Activated T-helper 1 cell treated with anti-CD3 and anti-CD28 coated beads, Interleukin-12 subunit alpha, Interleukin-12 subunit beta, Interleukin-2, Interleukin-4 antibody, amounts not matched to agents 30 ng/mL and 10 ng/mL and 1 ng/mL, durations not matched to agents 14 hours and 24 hours and 36 hours (primary cell): ENCODE measurements at regions of chr5 and their contacts with region 1.

Region 1: GRCh38 chr5:10563945-10564837 is at the start of gene ANKRD33B:
- DNase-seq: peak; percentile 82
- H3K4me3 Mint-ChIP-seq: peak within 1 kb of the TSS; percentile 95
- H3K27ac Mint-ChIP-seq: peak within 1 kb of the TSS; percentile 89
- H3K4me1 Mint-ChIP-seq: peaks cover 54% of the 10 kb centered on the region
- H3K27me3 Mint-ChIP-seq: peaks cover 23% of the 10 kb centered on the region
- total RNA-seq, gene ANKRD33B: 21.4 and 21.5 TPM in 2 replicates

Region 2: GRCh38 chr5:10441083-10441991 is 122.9 kb before region 1 on chr5 and contains the start of gene ROPN1L:
- intact Hi-C with region 1: loop called (anchors 5 kb)
- DNase-seq: peak; percentile 80
- H3K4me3 Mint-ChIP-seq: peak within 1 kb of the TSS; percentile 85
- H3K27ac Mint-ChIP-seq: no peak within 1 kb of the TSS
- H3K4me1 Mint-ChIP-seq: peaks cover 35% of the 10 kb centered on the region
- H3K27me3 Mint-ChIP-seq: peaks cover 2% of the 10 kb centered on the region
- total RNA-seq, gene ROPN1L: 0.16 and 0.20 TPM in 2 replicates

Region 3: GRCh38 chr5:10595678-10596309 is 31.6 kb after region 1 on chr5:
- intact Hi-C with region 1: loop called (anchors 1 kb)
- DNase-seq: peak; percentile 54
- H3K4me3 Mint-ChIP-seq: peak overlapping the region; percentile 9
- H3K27ac Mint-ChIP-seq: peak overlapping the region; percentile 44
- H3K4me1 Mint-ChIP-seq: peaks cover 77% of the 10 kb centered on the region
- H3K27me3 Mint-ChIP-seq: peaks cover 4% of the 10 kb centered on the region

Region 4: DNA sequence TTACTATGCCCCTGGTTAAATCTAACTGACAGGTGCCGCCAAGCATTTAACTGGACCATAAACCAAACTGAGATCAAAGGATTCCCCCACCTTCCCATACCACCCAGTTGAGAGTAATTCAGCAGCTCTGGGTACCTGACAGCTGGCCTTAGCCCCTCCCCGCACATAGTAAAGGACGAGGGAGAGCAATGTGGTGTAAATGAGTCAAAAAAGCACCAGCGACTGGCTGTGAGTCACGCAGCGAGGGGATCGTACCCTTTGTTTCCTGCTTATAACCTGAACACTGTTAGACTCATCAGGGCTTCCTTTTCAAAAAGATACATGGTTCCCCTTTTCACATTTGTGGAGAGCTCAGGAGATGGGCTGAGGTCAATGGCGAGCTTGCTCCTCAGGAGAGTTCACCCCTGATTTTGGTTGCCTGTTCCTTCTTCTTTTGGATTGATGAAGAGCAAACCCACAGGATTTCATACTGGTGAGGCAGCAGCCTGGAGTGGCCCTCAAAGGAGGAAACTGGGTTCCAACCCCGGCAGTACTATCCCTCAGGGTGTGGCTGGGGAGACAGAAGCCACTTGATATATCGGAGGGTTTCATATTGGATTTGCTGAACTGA is 71.2 kb after region 1 on chr5:
- intact Hi-C with region 1: loop called (anchors 1 kb)
- DNase-seq: peak; percentile 73
- H3K4me3 Mint-ChIP-seq: peak overlapping the region; percentile 69
- H3K27ac Mint-ChIP-seq: peak overlapping the region; percentile 93
- H3K4me1 Mint-ChIP-seq: peaks cover 80% of the 10 kb centered on the region
- H3K27me3 Mint-ChIP-seq: no peaks in the 10 kb centered on the region

Region 5: DNA sequence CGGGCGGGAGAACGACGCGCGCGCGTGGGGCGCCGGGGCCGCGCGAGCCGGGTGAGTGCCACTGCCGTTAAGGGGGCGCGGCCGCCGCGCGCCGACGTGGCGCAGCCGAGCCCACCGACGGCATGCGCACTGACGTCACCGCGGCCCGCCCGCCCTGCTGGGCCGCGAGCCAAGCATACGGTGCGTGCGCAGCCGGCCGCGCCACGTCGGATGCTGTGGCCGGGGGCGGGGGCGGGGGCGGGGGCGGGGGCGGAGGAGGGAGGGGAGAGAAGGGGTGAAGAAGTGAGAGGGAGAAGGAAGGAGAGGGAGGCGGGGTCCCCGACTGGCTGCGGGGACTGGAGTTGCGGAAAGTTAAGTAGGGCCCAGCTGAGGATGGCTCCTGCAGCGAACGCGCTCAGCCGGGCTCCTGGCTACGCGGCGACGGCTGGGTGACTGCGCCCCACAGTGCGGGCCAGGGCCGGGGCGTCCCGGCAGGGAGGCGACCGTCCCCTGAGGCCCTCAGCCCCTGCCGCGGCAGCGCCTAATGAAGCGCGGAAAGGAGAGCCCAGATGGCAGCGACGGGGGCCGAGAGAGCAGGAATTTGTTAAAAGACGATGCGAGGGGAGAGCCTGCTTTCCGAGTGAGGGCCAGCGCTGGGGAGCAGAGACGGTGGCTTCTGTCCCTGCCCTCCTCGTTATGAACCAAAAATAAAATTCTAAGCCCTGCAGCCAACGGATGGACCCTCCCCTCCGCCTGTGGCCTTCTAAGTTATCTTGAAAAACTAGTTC is 197.2 kb after region 1 on chr5 and contains the start of gene DAP:
- intact Hi-C with region 1: loop called (anchors 2 kb)
- DNase-seq: peak; percentile 91
- H3K4me3 Mint-ChIP-seq: peak within 1 kb of the TSS; percentile 93
- H3K27ac Mint-ChIP-seq: peak within 1 kb of the TSS; percentile 89
- H3K4me1 Mint-ChIP-seq: peaks cover 50% of the 10 kb centered on the region
- H3K27me3 Mint-ChIP-seq: peaks cover 9% of the 10 kb centered on the region
- total RNA-seq, gene DAP: 62.6 and 64.7 TPM in 2 replicates